ENCODE measurements at regions of chr1 and their contacts with region 1.

Region 1: GRCh38 chr1:93629099-93630059 is 52.3 kb downstream of the BCAR3 start:
- DNase-seq: peak; percentile 53 to 67
- H3K4me3 ChIP-seq: no peak overlapping the region
- H3K4me1 ChIP-seq: no peaks in the 10 kb centered on the region
- H3K27me3 ChIP-seq: no peaks in the 10 kb centered on the region

Region 2: GRCh38 chr1:93692983-93693591 is 63.7 kb after region 1 on chr1:
- in situ Hi-C with region 1: no loop called
- DNase-seq: no peak
- H3K4me3 ChIP-seq: no peak overlapping the region
- H3K4me1 ChIP-seq: peaks cover 20% of the 10 kb centered on the region
- H3K27me3 ChIP-seq: no peaks in the 10 kb centered on the region

Region 3: GRCh38 chr1:93827633-93828366 is 198.4 kb after region 1 on chr1:
- in situ Hi-C with region 1: loop called (anchors 10 kb)
- DNase-seq: no peak
- H3K4me3 ChIP-seq: no peak overlapping the region
- H3K4me1 ChIP-seq: no peaks in the 10 kb centered on the region
- H3K27me3 ChIP-seq: no peaks in the 10 kb centered on the region

Measured in HAP-1 (cell line).